ENCODE measurements at regions of chr11 and their contacts with region 1.

Region 1: GRCh38 chr11:65919146-65920033 is at the start of gene DRAP1:
- H3K4me3 Mint-ChIP-seq: peak within 1 kb of the TSS; percentile 97
- H3K27ac Mint-ChIP-seq: peak within 1 kb of the TSS; percentile 89
- H3K4me1 Mint-ChIP-seq: peaks cover 67% of the 10 kb centered on the region
- H3K27me3 Mint-ChIP-seq: peaks cover 2% of the 10 kb centered on the region

Region 2: GRCh38 chr11:65941720-65942310 is 22.4 kb after region 1 on chr11:
- intact Hi-C with region 1: loop called (anchors 1 kb)
- H3K4me3 Mint-ChIP-seq: peak overlapping the region; percentile 62
- H3K27ac Mint-ChIP-seq: peak overlapping the region; percentile 94
- H3K4me1 Mint-ChIP-seq: peaks cover 64% of the 10 kb centered on the region
- H3K27me3 Mint-ChIP-seq: no peaks in the 10 kb centered on the region

Region 3: GRCh38 chr11:65961232-65961901 is 42.0 kb after region 1 on chr11 and contains the start of gene SART1:
- intact Hi-C with region 1: loop called (anchors 1 kb)
- H3K4me3 Mint-ChIP-seq: peak within 1 kb of the TSS; percentile 94
- H3K27ac Mint-ChIP-seq: peak within 1 kb of the TSS; percentile 99
- H3K4me1 Mint-ChIP-seq: peaks cover 44% of the 10 kb centered on the region
- H3K27me3 Mint-ChIP-seq: no peaks in the 10 kb centered on the region

Region 4: DNA sequence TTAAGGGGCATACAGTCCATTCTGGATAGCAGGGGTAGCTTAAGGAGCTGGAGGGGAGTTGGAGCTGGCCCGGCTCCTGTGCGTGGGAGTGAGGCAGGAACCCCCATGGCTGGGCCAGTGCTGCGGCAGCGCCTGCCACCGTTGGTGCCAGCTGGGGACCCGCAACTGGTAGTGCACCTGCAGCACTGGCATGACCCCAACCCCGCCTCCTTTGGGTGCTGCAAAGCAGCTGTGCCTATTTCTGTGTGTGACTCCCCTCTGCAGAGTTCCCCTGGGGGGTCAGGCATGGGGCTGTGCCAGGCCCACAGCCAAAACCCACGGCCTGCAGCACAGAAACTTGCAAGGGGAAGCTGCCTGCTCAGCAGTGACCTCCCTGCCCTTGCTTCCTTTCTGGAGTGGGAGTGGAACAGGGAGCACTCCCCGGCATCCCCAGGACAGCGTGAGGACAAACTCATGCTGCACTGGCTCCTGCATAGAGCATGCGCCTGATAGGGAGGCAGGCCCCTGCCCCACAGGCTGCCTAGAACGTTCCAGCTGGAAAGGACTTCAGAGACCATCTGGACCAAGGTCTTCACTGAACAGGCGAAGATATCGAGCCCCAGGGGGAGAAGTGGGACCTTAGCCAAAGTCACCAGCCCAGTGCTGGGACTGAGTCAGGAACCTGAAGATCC is 322.8 kb after region 1 on chr11:
- intact Hi-C with region 1: no loop called
- H3K4me3 Mint-ChIP-seq: no peak overlapping the region
- H3K27ac Mint-ChIP-seq: no peak overlapping the region
- H3K4me1 Mint-ChIP-seq: peaks cover 8% of the 10 kb centered on the region
- H3K27me3 Mint-ChIP-seq: no peaks in the 10 kb centered on the region

Region 5: DNA sequence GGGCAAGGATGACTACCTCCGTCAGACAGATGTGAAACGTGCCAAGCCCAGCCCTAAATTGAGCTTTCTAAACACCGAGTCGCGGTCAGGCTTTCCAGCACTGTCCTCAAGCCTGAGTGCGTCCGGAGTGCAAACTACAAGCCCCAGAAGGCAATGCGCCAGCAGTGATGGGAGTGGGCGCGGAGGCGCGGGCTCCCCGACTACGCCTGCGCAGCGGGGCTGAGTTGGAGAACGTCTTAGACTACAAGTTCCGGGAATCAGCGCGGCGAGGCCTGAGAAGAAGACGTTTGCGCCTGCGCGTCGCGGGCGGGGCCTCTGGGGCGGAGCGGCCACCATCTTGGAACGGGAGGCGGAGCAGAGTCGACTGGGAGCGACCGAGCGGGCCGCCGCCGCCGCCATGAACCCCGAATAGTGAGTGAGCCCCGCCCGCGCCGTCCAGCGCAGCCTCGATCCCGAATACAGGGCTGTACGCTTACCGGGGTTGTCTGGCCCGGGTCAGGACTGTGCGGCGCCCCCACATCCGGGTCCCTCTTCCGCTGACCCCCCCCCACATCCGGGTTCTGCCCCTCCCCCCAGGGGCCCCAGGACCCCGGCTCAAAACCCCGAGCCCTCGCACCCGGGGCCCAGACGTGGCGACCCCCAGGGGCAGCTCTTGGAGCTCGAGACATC is 349.0 kb after region 1 on chr11 and contains the start of gene RAB1B:
- intact Hi-C with region 1: loop called (anchors 5 kb)
- H3K4me3 Mint-ChIP-seq: peak within 1 kb of the TSS; percentile 91
- H3K27ac Mint-ChIP-seq: peak within 1 kb of the TSS; percentile 87
- H3K4me1 Mint-ChIP-seq: peaks cover 44% of the 10 kb centered on the region
- H3K27me3 Mint-ChIP-seq: no peaks in the 10 kb centered on the region

Measured in dendritic cell treated with granulocyte-macrophage colony-stimulating factor and Interleukin-4, amounts not matched to agents 40 ng/mL and 50 ng/mL, for 4 days (primary cell).